ENCODE measurements at regions of chr11 and their contacts with region 1.

Region 1: GRCh38 chr11:75768112-75768908 is at the start of gene DGAT2:
- DNase-seq: peak; percentile 96
- H3K4me3 ChIP-seq: peak within 1 kb of the TSS; percentile 84
- H3K4me3 Mint-ChIP-seq: peak within 1 kb of the TSS; percentile 82
- H3K27ac Mint-ChIP-seq: peak within 1 kb of the TSS; percentile 98
- H3K4me1 ChIP-seq: peaks cover 20% of the 10 kb centered on the region
- H3K4me1 Mint-ChIP-seq: peaks cover 45% of the 10 kb centered on the region
- H3K27me3 ChIP-seq: no peaks in the 10 kb centered on the region
- H3K27me3 Mint-ChIP-seq: no peaks in the 10 kb centered on the region
- CTCF ChIP-seq: peak; percentile 83 to 97
- total RNA-seq, gene DGAT2: 73.6 and 75.8 TPM in 2 replicates

Region 2: GRCh38 chr11:75547580-75548058 is 220.7 kb before region 1 on chr11:
- CTCF ChIA-PET with region 1: no interaction called
- POLR2A ChIA-PET with region 1: no interaction called
- intact Hi-C with region 1: loop called (anchors 1 kb)
- DNase-seq: peak; percentile 89 to 90
- H3K4me3 ChIP-seq: no peak overlapping the region
- H3K4me3 Mint-ChIP-seq: no peak overlapping the region
- H3K27ac Mint-ChIP-seq: peak overlapping the region; percentile 82
- H3K4me1 ChIP-seq: peaks cover 7% of the 10 kb centered on the region
- H3K4me1 Mint-ChIP-seq: peaks cover 16% of the 10 kb centered on the region
- H3K27me3 ChIP-seq: no peaks in the 10 kb centered on the region
- H3K27me3 Mint-ChIP-seq: no peaks in the 10 kb centered on the region
- CTCF ChIP-seq: peak; percentile 96 to 99

Region 3: DNA sequence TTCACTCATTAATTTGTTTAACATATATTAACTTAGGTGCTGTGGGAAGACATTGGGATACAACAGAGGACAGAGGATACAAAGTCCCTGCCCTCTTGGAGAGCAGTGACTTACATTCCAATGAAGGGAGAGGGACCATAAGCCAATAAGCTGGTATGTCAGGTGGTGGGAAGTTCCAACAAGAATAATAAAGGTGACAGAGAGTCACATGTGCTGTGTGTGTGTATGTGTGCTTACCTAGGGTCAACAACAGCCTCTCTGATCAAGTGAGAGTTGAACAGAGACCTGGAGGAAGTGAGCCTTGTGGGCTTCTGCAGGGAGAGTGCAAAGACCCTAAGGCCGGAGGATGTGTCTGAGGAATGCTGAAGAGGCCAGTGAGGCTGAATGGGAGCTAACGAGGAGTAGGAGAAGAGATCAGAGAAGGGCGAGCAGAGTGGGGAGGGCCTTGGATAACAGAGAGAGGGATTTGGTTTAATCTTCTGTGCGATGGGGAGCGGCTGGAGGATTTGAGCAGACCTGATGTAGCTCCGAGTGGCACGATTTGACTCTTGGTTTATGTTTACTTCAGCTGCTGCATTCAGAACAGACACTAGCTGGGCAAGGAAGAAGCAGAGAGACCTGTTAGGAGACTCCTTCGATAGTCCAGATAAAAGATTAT is 134.8 kb before region 1 on chr11:
- CTCF ChIA-PET with region 1: no interaction called
- POLR2A ChIA-PET with region 1: no interaction called
- intact Hi-C with region 1: loop called (anchors 1 kb)
- DNase-seq: peak; percentile 85 to 89
- H3K4me3 ChIP-seq: no peak overlapping the region
- H3K4me3 Mint-ChIP-seq: peak overlapping the region; percentile 50
- H3K27ac Mint-ChIP-seq: peak overlapping the region; percentile 92
- H3K4me1 ChIP-seq: peaks cover 65% of the 10 kb centered on the region
- H3K4me1 Mint-ChIP-seq: peaks cover 43% of the 10 kb centered on the region
- H3K27me3 ChIP-seq: no peaks in the 10 kb centered on the region
- H3K27me3 Mint-ChIP-seq: no peaks in the 10 kb centered on the region
- CTCF ChIP-seq: no peak

Region 4: GRCh38 chr11:75697906-75698563 is 70.3 kb before region 1 on chr11:
- CTCF ChIA-PET with region 1: interaction called, 7 read pairs
- POLR2A ChIA-PET with region 1: no interaction called
- intact Hi-C with region 1: loop called (anchors 1 kb)
- DNase-seq: peak; percentile 93 to 96
- H3K4me3 ChIP-seq: no peak overlapping the region
- H3K4me3 Mint-ChIP-seq: peak overlapping the region; percentile 30
- H3K27ac Mint-ChIP-seq: peak overlapping the region; percentile 85
- H3K4me1 ChIP-seq: peaks cover 30% of the 10 kb centered on the region
- H3K4me1 Mint-ChIP-seq: peaks cover 50% of the 10 kb centered on the region
- H3K27me3 ChIP-seq: no peaks in the 10 kb centered on the region
- H3K27me3 Mint-ChIP-seq: no peaks in the 10 kb centered on the region
- CTCF ChIP-seq: no peak

Region 5: GRCh38 chr11:75802913-75803820 is 34.9 kb after region 1 on chr11:
- CTCF ChIA-PET with region 1: interaction called, 3 read pairs
- POLR2A ChIA-PET with region 1: no interaction called
- intact Hi-C with region 1: loop called (anchors 2 kb)
- DNase-seq: peak; percentile 79 to 89
- H3K4me3 ChIP-seq: no peak overlapping the region
- H3K4me3 Mint-ChIP-seq: no peak overlapping the region
- H3K27ac Mint-ChIP-seq: no peak overlapping the region
- H3K4me1 ChIP-seq: no peaks in the 10 kb centered on the region
- H3K4me1 Mint-ChIP-seq: no peaks in the 10 kb centered on the region
- H3K27me3 ChIP-seq: no peaks in the 10 kb centered on the region
- H3K27me3 Mint-ChIP-seq: no peaks in the 10 kb centered on the region
- CTCF ChIP-seq: peak; percentile 98